ENCODE measurements at regions of chr7 and their contacts with region 1.

Region 1: GRCh38 chr7:41711283-41712064 is 8.6 kb upstream of the INHBA start:
- DNase-seq: peak; percentile 48
- H3K4me3 ChIP-seq: no peak overlapping the region
- H3K27ac ChIP-seq: no peak overlapping the region
- H3K4me1 ChIP-seq: no peaks in the 10 kb centered on the region
- H3K27me3 ChIP-seq: peaks cover 0 to 2% of the 10 kb centered on the region in 2 experiments
- CTCF ChIP-seq: peak; percentile 52 to 69
- POLR2A ChIP-seq: no peak

Region 2: GRCh38 chr7:40329601-40330153 is 1381.8 kb before region 1 on chr7:
- CTCF ChIA-PET with region 1: interaction called, 11 read pairs
- POLR2A ChIA-PET with region 1: no interaction called
- dilution Hi-C with region 1: no loop called
- intact Hi-C with region 1: loop called (anchors 1 kb)
- DNase-seq: peak; percentile 72
- H3K4me3 ChIP-seq: no peak overlapping the region
- H3K27ac ChIP-seq: no peak overlapping the region
- H3K4me1 ChIP-seq: peaks cover 2% of the 10 kb centered on the region
- H3K27me3 ChIP-seq: no peaks in the 10 kb centered on the region
- CTCF ChIP-seq: peak; percentile 42 to 47
- POLR2A ChIP-seq: no peak

Region 3: GRCh38 chr7:40604601-40605438 is 1106.7 kb before region 1 on chr7:
- CTCF ChIA-PET with region 1: interaction called, 28 read pairs
- POLR2A ChIA-PET with region 1: no interaction called
- dilution Hi-C with region 1: no loop called
- intact Hi-C with region 1: no loop called
- DNase-seq: peak; percentile 65
- H3K4me3 ChIP-seq: no peak overlapping the region
- H3K27ac ChIP-seq: no peak overlapping the region
- H3K4me1 ChIP-seq: no peaks in the 10 kb centered on the region
- H3K27me3 ChIP-seq: no peaks in the 10 kb centered on the region
- CTCF ChIP-seq: peak; percentile 92 to 96
- POLR2A ChIP-seq: no peak

Region 4: GRCh38 chr7:41010418-41010817 is 701.1 kb before region 1 on chr7:
- CTCF ChIA-PET with region 1: interaction called, 87 read pairs
- POLR2A ChIA-PET with region 1: no interaction called
- dilution Hi-C with region 1: no loop called
- intact Hi-C with region 1: no loop called
- DNase-seq: peak; percentile 12
- H3K4me3 ChIP-seq: no peak overlapping the region
- H3K27ac ChIP-seq: peak overlapping the region; percentile 14
- H3K4me1 ChIP-seq: peaks cover 8% of the 10 kb centered on the region
- H3K27me3 ChIP-seq: no peaks in the 10 kb centered on the region
- CTCF ChIP-seq: no peak
- POLR2A ChIP-seq: no peak

Region 5: GRCh38 chr7:41573018-41573417 is 138.5 kb before region 1 on chr7:
- CTCF ChIA-PET with region 1: interaction called, 10 read pairs
- POLR2A ChIA-PET with region 1: no interaction called
- dilution Hi-C with region 1: no loop called
- intact Hi-C with region 1: no loop called
- DNase-seq: peak; percentile 84
- H3K4me3 ChIP-seq: no peak overlapping the region
- H3K27ac ChIP-seq: peak overlapping the region; percentile 96
- H3K4me1 ChIP-seq: peaks cover 48% of the 10 kb centered on the region
- H3K27me3 ChIP-seq: no peaks in the 10 kb centered on the region
- CTCF ChIP-seq: no peak
- POLR2A ChIP-seq: peak; percentile 33

Measured in endothelial cell of umbilical vein (primary cell).